PC-3 (cell line): ENCODE measurements at regions of chr11 and their contacts with region 1.

Region 1: DNA sequence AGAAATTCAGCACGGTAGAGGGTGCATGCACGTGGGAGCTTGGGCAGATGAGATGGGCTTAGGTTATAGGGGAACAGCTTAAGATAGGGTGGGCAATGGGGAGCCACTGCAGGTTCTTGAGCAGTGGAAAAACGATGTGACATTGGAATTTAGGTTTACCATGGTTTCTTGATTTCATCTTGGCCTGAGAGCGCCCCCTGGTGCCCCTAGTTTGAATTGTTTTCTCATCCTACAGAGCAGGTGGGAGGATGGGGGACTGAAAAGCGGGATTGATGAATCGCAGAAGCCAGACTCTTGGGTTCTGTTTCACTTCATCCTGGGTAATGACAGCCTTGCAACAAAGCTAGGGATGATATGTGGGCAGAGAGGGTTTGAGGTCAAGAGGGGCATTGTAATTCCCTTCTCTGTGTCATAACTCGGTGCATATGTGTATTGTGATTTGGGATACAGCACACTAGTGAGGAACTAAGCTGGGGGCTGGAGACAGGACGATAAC is 6.7 kb upstream of the MCAM start:
- DNase-seq: peak; percentile 86
- ATAC-seq: 0 out of 2 replicates have a peak, but pooled peaks have one; percentile 4
- H3K4me3 ChIP-seq: no peak overlapping the region
- H3K27ac ChIP-seq: no peak overlapping the region
- H3K4me1 ChIP-seq: peaks cover 21% of the 10 kb centered on the region
- H3K27me3 ChIP-seq: no peaks in the 10 kb centered on the region
- CTCF ChIP-seq: peak; percentile 95

Region 2: DNA sequence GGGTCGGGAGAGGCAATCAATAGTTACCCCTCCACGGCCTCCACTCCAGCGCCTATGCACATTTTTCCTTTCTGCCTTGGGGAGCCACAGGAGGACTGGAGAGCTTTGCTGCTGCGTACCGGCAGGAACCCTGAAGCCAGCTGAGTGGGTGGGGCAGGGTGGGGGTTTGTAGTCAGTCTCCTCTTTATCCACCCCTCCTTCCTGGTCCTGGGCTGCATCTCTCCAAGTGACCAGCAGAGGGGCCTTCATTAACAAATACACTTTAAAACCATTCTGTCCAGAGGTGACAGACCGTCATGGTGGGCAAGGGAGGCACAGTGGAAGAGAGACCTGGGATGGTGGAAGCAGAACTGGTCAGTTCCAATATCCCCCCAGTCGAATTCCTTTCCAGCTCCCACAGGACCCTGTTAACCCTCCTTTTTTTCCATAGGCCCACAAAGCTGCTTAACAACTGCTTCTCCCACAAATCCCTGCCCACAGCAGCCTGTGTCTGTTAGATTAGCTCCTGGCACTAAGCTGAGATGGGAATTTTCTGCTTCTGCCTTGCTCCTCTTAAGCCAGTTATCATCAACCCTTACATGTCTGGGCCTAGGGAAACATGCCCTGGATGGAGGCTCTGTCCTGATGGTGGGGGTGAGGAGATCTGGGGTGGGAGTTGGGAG is 178.6 kb before region 1 on chr11:
- CTCF ChIA-PET with region 1: no interaction called
- POLR2A ChIA-PET with region 1: no interaction called
- intact Hi-C with region 1: no loop called
- DNase-seq: peak; percentile 83
- ATAC-seq: peak; percentile 89
- H3K4me3 ChIP-seq: no peak overlapping the region; the same call in 1 of the 2 replicates
- H3K27ac ChIP-seq: no peak overlapping the region
- H3K4me1 ChIP-seq: 0 out of 2 replicates have a peak, but pooled peaks cover 3% of the 10 kb centered on the region
- H3K27me3 ChIP-seq: no peaks in the 10 kb centered on the region
- CTCF ChIP-seq: peak; percentile 63

Region 3: GRCh38 chr11:119168471-119169281 is 154.9 kb before region 1 on chr11 and contains the start of gene NLRX1:
- CTCF ChIA-PET with region 1: interaction called, 6 read pairs
- POLR2A ChIA-PET with region 1: no interaction called
- intact Hi-C with region 1: loop called (anchors 10 kb)
- DNase-seq: peak; percentile 90
- ATAC-seq: peak; percentile 80
- H3K4me3 ChIP-seq: peak within 1 kb of the TSS; percentile 80
- H3K27ac ChIP-seq: peak within 1 kb of the TSS; percentile 36
- H3K4me1 ChIP-seq: peaks cover 22% of the 10 kb centered on the region
- H3K27me3 ChIP-seq: no peaks in the 10 kb centered on the region
- CTCF ChIP-seq: peak; percentile 90
- total RNA-seq, gene NLRX1: 16.8 and 17.2 TPM in 2 replicates

Region 4: DNA sequence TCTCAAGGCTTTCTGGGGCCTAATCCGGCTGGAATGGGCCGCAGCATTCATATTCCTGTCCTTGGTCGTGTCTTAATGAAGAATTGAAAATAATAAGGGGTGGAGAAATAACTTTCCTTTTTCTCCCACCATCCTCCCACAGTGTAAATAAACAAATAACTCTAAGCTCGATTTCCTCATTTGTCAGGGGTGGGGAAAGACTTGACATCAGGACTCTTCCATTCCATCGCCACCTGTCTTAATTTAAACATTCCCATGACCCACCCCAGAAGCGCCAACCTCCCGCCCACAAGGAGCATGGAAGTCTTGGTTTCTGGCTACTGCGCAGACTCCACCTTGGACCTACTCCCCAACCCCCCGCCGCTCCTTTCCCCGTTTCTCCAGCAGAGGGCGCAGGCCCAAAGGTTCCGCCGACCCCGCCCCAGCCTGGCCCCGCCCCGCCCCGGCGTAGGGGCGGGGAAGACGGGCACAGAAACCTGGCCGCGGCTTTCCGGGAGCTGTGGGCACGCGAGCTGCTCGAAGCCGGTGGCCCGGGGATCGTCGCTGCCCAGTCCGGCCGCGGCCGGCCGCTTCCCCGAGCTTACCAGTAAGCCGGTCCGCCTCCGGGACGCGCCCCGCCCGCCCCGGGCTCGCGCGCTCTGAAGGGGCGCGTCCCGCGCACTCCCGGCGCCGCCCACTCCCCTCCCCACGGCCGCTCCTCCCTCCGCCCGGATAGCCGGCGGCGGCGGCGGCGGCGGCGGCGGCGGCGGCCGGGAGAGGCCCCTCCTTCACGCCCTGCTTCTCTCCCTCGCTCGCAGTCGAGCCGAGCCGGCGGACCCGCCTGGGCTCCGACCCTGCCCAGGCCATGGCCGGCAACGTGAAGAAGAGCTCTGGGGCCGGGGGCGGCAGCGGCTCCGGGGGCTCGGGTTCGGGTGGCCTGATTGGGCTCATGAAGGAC is 117.7 kb before region 1 on chr11 and contains the start of gene CBL:
- CTCF ChIA-PET with region 1: interaction called, 3 read pairs
- POLR2A ChIA-PET with region 1: no interaction called
- intact Hi-C with region 1: loop called (anchors 5 kb)
- DNase-seq: peak; percentile 96
- ATAC-seq: peak; percentile 86
- H3K4me3 ChIP-seq: peak within 1 kb of the TSS; percentile 99
- H3K27ac ChIP-seq: peak within 1 kb of the TSS; percentile 58
- H3K4me1 ChIP-seq: peaks cover 18% of the 10 kb centered on the region
- H3K27me3 ChIP-seq: no peaks in the 10 kb centered on the region
- CTCF ChIP-seq: peak; percentile 88
- total RNA-seq, gene CBL: 11.4 and 15.3 TPM in 2 replicates

Region 5: GRCh38 chr11:119273721-119274120 is 49.9 kb before region 1 on chr11:
- CTCF ChIA-PET with region 1: no interaction called
- POLR2A ChIA-PET with region 1: no interaction called
- intact Hi-C with region 1: no loop called
- DNase-seq: no peak
- ATAC-seq: no peak
- H3K4me3 ChIP-seq: no peak overlapping the region
- H3K27ac ChIP-seq: no peak overlapping the region
- H3K4me1 ChIP-seq: no peaks in the 10 kb centered on the region
- H3K27me3 ChIP-seq: no peaks in the 10 kb centered on the region
- CTCF ChIP-seq: no peak

Region 6: DNA sequence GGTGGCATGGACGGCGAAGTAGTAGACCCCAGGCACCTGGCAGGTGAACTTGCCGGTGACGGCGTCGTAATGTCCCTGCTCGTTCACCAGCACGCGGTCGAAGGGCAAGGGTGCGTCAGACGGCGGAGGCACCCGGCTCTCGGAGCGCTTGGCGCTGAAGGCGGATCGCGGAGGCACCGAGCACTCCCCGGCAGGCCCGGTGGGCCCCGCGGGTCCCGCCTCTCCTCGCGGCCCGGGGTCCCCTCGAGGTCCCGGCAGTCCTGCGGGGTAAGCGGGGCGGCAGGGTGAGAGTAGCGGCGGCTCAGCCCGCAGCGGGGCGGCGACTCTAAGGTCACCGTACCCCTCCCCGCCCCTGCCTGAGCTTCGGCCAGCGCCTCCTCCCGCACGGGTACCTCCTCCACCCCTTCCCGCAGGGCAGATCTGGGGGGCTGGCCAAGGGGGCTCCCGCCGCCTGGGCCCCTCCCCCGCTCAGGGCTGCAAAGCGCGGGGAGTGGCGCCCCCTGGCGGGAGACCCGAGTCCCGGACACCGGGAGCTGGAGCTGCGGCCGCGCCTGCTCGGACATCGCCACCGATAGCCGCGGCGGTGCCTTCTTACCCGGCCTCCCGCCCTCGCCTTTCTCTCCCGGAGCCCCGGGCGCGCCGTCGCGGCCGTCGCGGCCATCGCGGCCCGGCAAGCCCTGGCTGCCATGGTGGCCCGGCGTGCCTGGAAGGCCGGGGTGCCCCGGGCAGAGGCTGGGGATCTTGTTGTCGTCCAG is 16.2 kb after region 1 on chr11:
- CTCF ChIA-PET with region 1: interaction called, 21 read pairs
- POLR2A ChIA-PET with region 1: interaction called, 3 read pairs
- intact Hi-C with region 1: loop called (anchors 1 kb)
- DNase-seq: peak; percentile 47
- ATAC-seq: peak; percentile 29; the same call in 1 of the 2 replicates
- H3K4me3 ChIP-seq: peak overlapping the region; percentile 64
- H3K27ac ChIP-seq: no peak overlapping the region
- H3K4me1 ChIP-seq: peaks cover 37% of the 10 kb centered on the region
- H3K27me3 ChIP-seq: no peaks in the 10 kb centered on the region
- CTCF ChIP-seq: peak; percentile 89